Common myeloid progenitor, CD34-positive (primary cell): ENCODE measurements at regions of chr12 and their contacts with region 1.

Region 1: GRCh38 chr12:56127888-56128669 is at the start of gene ESYT1:
- DNase-seq: peak; percentile 100
- H3K4me3 ChIP-seq: peak within 1 kb of the TSS; percentile 83 to 97 (median 90)
- H3K27ac ChIP-seq: peak within 1 kb of the TSS; percentile 78 to 91
- H3K4me1 ChIP-seq: peaks cover 26 to 68% (median 64%) of the 10 kb centered on the region in 4 experiments
- H3K27me3 ChIP-seq: no peaks in the 10 kb centered on the region

Region 2: GRCh38 chr12:55748230-55748993 is 379.7 kb before region 1 on chr12:
- CTCF ChIA-PET with region 1: no interaction called
- POLR2A ChIA-PET with region 1: no interaction called
- DNase-seq: no peak
- H3K4me3 ChIP-seq: no peak overlapping the region
- H3K27ac ChIP-seq: no peak overlapping the region
- H3K4me1 ChIP-seq: peaks cover 2 to 28% (median 18%) of the 10 kb centered on the region in 4 experiments
- H3K27me3 ChIP-seq: no peaks in the 10 kb centered on the region

Region 3: DNA sequence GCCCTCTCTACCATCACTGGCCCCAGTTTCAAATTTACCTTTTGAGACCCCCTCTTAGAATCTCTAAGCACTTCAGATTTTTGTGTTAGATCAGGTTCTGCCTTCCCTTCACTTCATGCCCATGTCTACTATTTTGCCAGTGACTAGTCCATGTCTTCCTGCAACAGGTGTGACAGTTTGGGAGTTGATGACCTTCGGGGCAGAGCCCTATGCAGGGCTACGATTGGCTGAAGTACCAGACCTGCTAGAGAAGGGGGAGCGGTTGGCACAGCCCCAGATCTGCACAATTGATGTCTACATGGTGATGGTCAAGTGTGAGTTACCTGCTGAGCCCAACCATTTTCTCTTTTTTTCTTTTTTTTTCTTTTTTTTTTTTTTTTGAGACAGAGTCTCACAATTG is 29.5 kb before region 1 on chr12:
- CTCF ChIA-PET with region 1: no interaction called
- POLR2A ChIA-PET with region 1: no interaction called
- DNase-seq: no peak
- H3K4me3 ChIP-seq: no peak overlapping the region
- H3K27ac ChIP-seq: no peak overlapping the region
- H3K4me1 ChIP-seq: peaks cover 8 to 11% (median 9%) of the 10 kb centered on the region in 4 experiments
- H3K27me3 ChIP-seq: peaks cover 0 to 6% (median 0%) of the 10 kb centered on the region in 5 experiments

Region 4: DNA sequence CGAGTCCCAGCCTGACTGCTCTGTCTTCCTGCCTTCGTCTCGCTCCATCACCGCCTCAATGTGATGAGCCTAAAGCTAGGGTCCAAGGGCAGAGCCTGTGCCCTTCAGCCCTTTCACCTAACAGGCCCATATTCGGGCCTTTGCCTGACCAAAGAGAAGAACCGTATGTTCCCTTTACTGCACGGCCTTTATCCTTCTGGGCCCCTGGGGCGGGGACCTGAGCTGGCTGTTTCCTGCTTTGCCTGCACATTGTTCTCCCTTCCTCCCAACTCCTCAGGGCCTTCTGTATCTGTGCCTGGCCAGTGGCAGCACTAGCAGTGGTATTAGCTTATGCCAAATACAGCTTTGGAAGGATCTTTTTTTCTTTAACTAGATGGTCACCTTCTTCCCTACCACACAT is 15.8 kb after region 1 on chr12:
- CTCF ChIA-PET with region 1: interaction called, 90 read pairs
- POLR2A ChIA-PET with region 1: interaction called, 3 read pairs
- DNase-seq: no peak
- H3K4me3 ChIP-seq: no peak overlapping the region
- H3K27ac ChIP-seq: no peak overlapping the region
- H3K4me1 ChIP-seq: peaks cover 0 to 24% (median 10%) of the 10 kb centered on the region in 4 experiments
- H3K27me3 ChIP-seq: no peaks in the 10 kb centered on the region

Region 5: DNA sequence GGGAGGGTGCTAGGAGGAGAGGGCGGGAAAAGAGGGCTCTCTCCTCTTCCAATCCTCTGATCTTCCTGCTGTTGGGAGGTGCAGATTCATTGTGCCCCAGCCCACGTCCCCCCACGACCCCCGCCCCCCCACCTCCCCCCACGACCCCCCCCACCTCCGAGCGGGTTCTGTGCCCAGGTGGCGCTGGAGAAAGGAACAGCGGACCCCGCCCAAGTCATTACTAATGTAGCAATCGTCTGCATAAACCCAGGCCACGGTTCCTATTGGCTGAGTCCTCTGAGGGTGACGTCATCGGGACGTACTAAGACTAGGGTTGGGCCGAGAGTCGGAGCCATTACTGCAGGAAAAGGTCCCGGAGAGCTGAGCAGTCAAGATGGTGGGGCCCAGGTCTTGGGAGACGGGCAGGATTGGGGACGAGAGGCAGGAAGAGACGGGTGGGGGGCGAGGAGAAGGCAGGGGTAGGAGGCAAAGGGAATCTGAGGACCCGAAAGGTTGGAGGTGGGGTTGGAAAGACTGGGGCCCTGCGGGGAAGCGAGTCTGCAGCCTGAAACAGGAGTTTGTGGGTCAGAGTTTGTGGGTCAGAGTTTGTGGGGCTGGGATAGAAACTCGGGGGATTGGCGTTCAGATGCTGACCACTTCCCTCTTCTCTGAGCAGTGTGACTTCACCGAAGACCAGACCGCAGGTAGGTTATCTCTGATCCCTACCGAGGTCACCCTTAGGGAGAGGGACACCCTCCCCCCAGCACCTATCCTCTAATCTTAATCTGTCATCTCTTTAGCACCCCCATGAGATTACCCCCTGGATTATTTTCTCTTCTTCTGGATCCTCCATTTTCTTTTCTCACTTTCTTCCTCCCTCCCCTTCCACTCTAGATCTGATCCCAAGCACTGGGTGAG is 30.2 kb after region 1 on chr12 and contains the start of gene MYL6:
- CTCF ChIA-PET with region 1: interaction called, 36 read pairs
- POLR2A ChIA-PET with region 1: interaction called, 24 read pairs
- DNase-seq: peak; percentile 97 to 98 (median 98)
- H3K4me3 ChIP-seq: peak within 1 kb of the TSS; percentile 71 to 99 (median 97)
- H3K27ac ChIP-seq: peak within 1 kb of the TSS; percentile 94 to 98
- H3K4me1 ChIP-seq: peaks cover 10 to 42% (median 37%) of the 10 kb centered on the region in 4 experiments
- H3K27me3 ChIP-seq: no peaks in the 10 kb centered on the region

Region 6: GRCh38 chr12:56224102-56224701 is 96.1 kb after region 1 on chr12 and contains the start of gene NABP2:
- CTCF ChIA-PET with region 1: interaction called, 7 read pairs
- POLR2A ChIA-PET with region 1: interaction called, 11 read pairs
- DNase-seq: peak; percentile 96
- H3K4me3 ChIP-seq: peak within 1 kb of the TSS; percentile 37 to 89 (median 83)
- H3K27ac ChIP-seq: peak within 1 kb of the TSS in 1 of 2 experiments; percentile 83
- H3K4me1 ChIP-seq: peaks cover 9 to 49% (median 42%) of the 10 kb centered on the region in 4 experiments
- H3K27me3 ChIP-seq: no peaks in the 10 kb centered on the region

Region 7: GRCh38 chr12:56677680-56678079 is 549.6 kb after region 1 on chr12:
- CTCF ChIA-PET with region 1: no interaction called
- POLR2A ChIA-PET with region 1: no interaction called
- DNase-seq: no peak
- H3K4me3 ChIP-seq: no peak overlapping the region
- H3K27ac ChIP-seq: peak overlapping the region; percentile 33 to 54
- H3K4me1 ChIP-seq: peaks cover 0 to 12% (median 4%) of the 10 kb centered on the region in 4 experiments
- H3K27me3 ChIP-seq: no peaks in the 10 kb centered on the region